Lower lobe of right lung (tissue), 2 donors: ENCODE measurements at regions of chr14 and their contacts with region 1.

Region 1: GRCh38 chr14:91286530-91286937 is 42.0 kb upstream of the GPR68 start:
- DNase-seq: peak; percentile 73
- ATAC-seq: peak; percentile 81 to 86
- H3K4me3 ChIP-seq: no peak overlapping the region
- H3K27ac ChIP-seq: no peak overlapping the region
- H3K4me1 ChIP-seq: peaks cover 9% of the 10 kb centered on the region
- H3K27me3 ChIP-seq: no peaks in the 10 kb centered on the region
- CTCF ChIP-seq: peak; percentile 90

Region 2: GRCh38 chr14:90903101-90903500 is 383.4 kb before region 1 on chr14:
- intact Hi-C with region 1: loop called (anchors 10 kb)
- DNase-seq: no peak
- ATAC-seq: peak; percentile 82 to 84
- H3K4me3 ChIP-seq: no peak overlapping the region
- H3K27ac ChIP-seq: no peak overlapping the region
- H3K4me1 ChIP-seq: no peaks in the 10 kb centered on the region
- H3K27me3 ChIP-seq: no peaks in the 10 kb centered on the region
- CTCF ChIP-seq: peak; percentile 78

Region 3: GRCh38 chr14:91177073-91178034 is 109.2 kb before region 1 on chr14:
- intact Hi-C with region 1: loop called (anchors 5 kb)
- DNase-seq: peak; percentile 67
- ATAC-seq: peak; percentile 77 to 78
- H3K4me3 ChIP-seq: no peak overlapping the region
- H3K27ac ChIP-seq: no peak overlapping the region
- H3K4me1 ChIP-seq: peaks cover 6% of the 10 kb centered on the region
- H3K27me3 ChIP-seq: no peaks in the 10 kb centered on the region
- CTCF ChIP-seq: peak; percentile 80